Dendritic cell treated with granulocyte-macrophage colony-stimulating factor and Interleukin-4, amounts not matched to agents 40 ng/mL and 50 ng/mL, for 4 days (primary cell): ENCODE measurements at regions of chr18 and their contacts with region 1.

Region 1: GRCh38 chr18:70205421-70206397 is at the start of gene RTTN:
- H3K4me3 Mint-ChIP-seq: peak within 1 kb of the TSS; percentile 90
- H3K27ac Mint-ChIP-seq: peak within 1 kb of the TSS; percentile 97
- H3K4me1 Mint-ChIP-seq: peaks cover 17% of the 10 kb centered on the region
- H3K27me3 Mint-ChIP-seq: no peaks in the 10 kb centered on the region

Region 2: DNA sequence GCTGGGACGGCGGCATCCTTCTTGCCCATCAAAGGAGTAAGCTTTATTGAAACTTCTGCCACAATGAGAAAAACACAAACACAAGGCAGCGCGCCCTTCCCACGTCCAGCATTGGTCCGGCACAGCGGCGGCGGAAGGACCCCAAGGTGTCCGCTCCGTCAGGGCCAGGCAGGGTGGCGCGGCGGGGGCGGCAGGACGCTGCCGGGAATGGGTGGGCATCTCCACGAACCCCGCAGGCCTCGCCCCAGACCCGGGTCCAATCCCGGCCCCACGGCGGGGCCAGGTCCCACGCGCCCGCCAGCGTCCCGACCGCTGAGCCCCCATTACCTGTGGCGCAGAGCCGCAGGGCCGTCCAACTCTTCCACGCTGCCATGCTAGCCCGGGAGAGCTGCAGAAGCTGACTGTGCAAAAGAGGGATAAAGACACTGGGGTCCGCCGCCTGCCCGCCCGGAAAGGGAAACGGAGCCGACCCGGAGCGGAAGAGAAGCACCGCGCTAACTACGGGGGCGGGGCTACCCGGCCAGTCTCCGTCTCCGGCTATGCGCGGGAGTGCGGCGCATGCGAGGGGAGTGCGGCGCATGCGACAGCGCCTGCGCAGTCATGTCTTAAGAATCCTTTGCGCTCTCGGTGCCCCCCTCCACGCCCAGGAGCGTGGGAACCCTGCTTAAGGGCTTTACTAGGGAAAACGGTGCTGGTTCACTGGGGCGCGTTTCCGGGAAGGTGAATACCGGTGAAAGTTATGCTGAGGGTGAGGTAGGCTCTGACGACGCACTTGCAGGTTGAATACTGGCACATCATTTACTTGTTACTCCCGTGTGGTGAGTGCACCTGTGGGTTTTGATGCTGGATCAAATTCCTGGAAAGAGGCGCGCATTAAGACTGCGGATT is 1490.9 kb before region 1 on chr18 and contains the start of gene TMX3:
- intact Hi-C with region 1: loop called (anchors 10 kb)
- H3K4me3 Mint-ChIP-seq: peak within 1 kb of the TSS; percentile 93
- H3K27ac Mint-ChIP-seq: peak within 1 kb of the TSS; percentile 85
- H3K4me1 Mint-ChIP-seq: peaks cover 20% of the 10 kb centered on the region
- H3K27me3 Mint-ChIP-seq: no peaks in the 10 kb centered on the region